BJ (cell line): ENCODE measurements at regions of chr9 and their contacts with region 1.

Region 1: GRCh38 chr9:121213136-121213806 is 11.6 kb upstream of the RAB14 start:
- DNase-seq: peak; percentile 34
- H3K4me3 ChIP-seq: no peak overlapping the region
- H3K27me3 ChIP-seq: no peaks in the 10 kb centered on the region
- CTCF ChIP-seq: peak; percentile 96

Region 2: DNA sequence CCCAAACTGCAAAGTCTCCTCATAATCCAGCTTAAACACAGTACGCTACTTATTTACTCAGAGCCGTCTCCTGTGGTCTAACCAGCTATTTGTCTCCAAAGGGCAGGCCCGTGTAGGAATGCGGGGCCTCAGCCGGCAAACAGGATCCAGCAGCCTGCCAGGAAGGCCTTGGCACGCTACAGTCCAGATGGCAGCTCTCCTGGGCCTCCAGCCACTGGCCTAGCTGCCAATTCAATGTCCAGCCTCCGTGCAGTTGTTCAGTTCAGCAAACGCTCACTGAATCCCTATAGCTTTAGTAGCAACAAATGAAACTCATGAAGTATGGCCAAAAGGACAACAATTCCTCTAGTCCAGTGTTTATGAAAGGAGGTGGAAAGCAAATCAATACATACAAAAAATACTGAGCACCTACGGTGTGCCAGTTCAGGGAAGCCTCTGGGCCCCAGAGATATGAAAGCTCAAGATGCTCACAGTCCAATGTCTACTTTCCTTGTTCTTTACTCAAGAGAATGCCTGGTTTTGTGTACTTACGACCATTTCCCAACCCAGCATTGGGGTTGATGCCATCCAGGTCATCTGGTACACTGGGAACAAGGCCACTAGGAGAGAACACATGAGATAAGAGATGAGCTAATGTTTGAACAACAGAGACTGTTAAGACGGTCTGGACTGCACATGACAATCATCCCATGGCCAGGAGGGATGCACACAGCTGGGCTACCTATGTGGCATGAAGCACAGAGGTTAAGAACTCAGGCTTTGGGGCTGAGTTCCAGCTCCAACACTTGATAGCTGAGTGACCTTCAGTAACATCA is 641.6 kb before region 1 on chr9:
- CTCF ChIA-PET with region 1: no interaction called
- POLR2A ChIA-PET with region 1: no interaction called
- DNase-seq: peak; percentile 49
- H3K4me3 ChIP-seq: no peak overlapping the region
- H3K27me3 ChIP-seq: no peaks in the 10 kb centered on the region
- CTCF ChIP-seq: no peak

Region 3: DNA sequence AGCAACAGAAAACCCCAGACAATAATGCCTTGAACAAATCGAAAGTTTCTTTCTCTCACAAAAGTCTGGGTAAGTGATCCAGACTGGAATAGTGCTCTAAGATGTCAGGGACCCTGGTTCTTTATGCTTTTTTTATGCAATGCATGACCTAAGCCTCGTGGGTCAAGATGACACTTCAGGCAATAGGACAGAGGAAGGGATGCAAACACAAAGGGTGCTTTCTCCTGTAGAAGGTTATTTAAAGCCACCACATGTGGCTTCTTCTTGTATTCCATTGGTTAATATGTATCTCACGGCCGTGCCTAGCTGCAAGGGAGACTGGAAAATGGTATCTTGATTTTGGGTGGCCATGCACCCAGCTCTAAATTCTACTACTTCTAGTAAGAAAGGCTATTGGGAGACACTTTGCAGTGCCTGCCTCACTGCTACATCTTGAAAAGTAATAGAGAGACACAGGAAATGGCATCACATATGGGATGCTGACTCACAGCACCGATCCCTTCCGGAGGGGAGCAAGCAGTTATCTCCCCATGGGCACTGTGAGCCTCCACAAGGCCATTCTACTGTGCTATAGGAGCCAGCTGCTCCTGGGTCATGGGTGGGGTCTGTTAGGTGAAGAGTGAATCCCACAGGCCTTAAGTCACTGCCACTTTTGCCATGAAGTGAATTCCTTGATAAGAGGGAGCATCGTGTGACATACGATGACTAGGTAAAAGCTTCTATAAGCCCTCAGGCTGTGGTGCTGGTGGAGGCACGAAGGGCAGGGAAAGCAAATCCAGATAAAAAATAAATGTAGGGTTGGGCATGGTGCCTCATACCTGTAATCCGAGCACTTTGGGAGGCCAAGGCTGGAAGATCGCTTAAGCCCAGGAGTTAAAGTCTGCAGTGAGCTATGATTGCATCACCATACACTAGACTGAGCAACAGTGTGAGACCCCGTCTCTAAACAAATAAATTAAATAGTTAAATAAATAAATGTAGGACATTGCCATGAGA is 20.9 kb after region 1 on chr9:
- CTCF ChIA-PET with region 1: interaction called, 12 read pairs
- POLR2A ChIA-PET with region 1: no interaction called
- DNase-seq: no peak
- H3K4me3 ChIP-seq: no peak overlapping the region
- H3K27me3 ChIP-seq: no peaks in the 10 kb centered on the region
- CTCF ChIP-seq: no peak

Region 4: DNA sequence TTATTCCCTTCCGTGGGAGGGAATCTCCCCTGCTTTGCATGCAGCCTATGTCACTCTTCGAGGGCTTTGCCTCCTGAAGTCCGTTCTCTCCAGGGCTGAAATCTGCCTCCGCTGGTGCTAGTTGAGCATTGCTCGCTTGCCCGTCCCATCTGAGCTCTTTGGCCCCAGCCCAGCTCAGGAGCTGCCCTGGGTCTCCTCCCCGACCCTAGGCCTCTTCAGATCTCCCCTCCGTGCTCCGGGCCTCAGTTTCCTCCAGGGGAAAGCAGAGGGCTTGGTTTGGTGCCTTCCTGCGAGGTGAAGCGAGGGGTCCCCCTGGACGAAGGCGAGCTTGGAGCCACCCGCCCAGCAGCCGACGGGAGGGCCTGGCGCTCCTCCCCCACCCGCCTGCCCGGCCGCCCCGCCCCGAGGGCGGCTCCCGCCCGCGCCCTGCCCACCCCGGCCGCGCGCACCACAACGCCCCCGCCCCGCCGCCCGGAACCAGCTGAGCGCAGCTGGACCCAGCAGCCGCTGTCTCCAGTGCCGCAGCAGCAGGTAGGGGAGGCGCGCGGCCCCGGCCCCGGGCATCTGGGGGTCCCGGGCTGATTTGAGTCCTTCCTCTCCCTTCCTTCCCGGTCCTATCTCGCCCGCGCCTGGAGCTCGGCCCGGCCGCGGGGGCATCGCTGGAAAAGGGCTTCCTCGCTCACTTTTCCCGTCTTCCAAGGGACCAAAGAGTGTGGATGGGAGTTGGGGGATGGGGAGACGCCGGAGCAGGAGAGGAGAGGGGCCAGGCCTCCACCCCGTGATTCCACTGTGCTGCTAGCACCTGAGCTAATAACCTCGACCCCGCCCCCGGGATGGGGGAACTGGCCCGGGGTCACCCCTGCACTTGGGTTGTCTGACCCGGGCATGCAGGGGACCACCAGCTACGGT is 54.7 kb after region 1 on chr9 and contains the start of gene GSN:
- CTCF ChIA-PET with region 1: interaction called, 20 read pairs
- POLR2A ChIA-PET with region 1: no interaction called
- DNase-seq: no peak
- H3K4me3 ChIP-seq: peak within 1 kb of the TSS; percentile 89
- H3K27me3 ChIP-seq: no peaks in the 10 kb centered on the region
- CTCF ChIP-seq: peak; percentile 24; the same call in 1 of the 2 replicates
- polyA plus RNA-seq, gene GSN: 493 and 765 TPM in 2 replicates

Region 5: GRCh38 chr9:121286973-121287741 is 73.9 kb after region 1 on chr9:
- CTCF ChIA-PET with region 1: interaction called, 20 read pairs
- POLR2A ChIA-PET with region 1: no interaction called
- DNase-seq: peak; percentile 87
- H3K4me3 ChIP-seq: no peak overlapping the region
- H3K27me3 ChIP-seq: no peaks in the 10 kb centered on the region
- CTCF ChIP-seq: peak; percentile 38

Region 6: GRCh38 chr9:121376214-121376830 is 163.1 kb after region 1 on chr9:
- CTCF ChIA-PET with region 1: interaction called, 67 read pairs
- POLR2A ChIA-PET with region 1: no interaction called
- DNase-seq: no peak
- H3K4me3 ChIP-seq: no peak overlapping the region
- H3K27me3 ChIP-seq: no peaks in the 10 kb centered on the region
- CTCF ChIP-seq: peak; percentile 28